ENCODE measurements at regions of chr19 and their contacts with region 1.

Region 1: DNA sequence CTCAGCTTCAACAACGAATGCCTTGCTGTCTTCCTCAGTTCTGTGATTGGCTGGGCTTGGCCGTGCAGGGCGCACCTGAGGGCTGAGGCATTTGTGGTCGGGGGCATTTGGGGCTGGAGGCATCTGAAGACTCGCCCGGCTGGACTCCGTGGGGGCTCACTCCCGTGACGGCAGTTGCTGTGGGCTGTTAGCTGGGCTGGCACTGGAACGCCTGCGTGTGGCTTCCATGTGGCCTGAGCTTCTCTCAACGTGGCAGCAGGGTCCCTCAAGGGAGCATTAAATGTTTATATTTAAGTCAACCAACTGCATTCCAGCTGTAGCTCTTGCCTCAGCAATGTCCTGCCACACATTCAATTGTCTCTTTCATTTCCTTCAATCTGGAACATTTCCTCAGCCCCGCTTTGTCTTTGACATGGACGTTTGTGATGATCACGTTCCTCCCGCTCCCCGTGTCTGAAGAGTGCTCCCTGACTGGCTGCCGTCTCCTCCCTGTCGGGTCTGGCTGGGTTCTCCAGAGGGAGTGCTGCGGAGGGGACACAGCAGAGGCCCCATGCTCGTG is 21.0 kb downstream of the CCDC8 start:
- DNase-seq: no peak
- ATAC-seq: no peak
- H3K4me3 ChIP-seq: no peak overlapping the region
- H3K27ac ChIP-seq: no peak overlapping the region
- H3K4me1 ChIP-seq: no peaks in the 10 kb centered on the region
- H3K27me3 ChIP-seq: no peaks in the 10 kb centered on the region
- CTCF ChIP-seq: no peak

Region 2: GRCh38 chr19:46159418-46160232 is 232.7 kb before region 1 on chr19:
- CTCF ChIA-PET with region 1: no interaction called
- POLR2A ChIA-PET with region 1: no interaction called
- in situ Hi-C with region 1: no loop called
- intact Hi-C with region 1: no loop called
- DNase-seq: no peak
- ATAC-seq: no peak
- H3K4me3 ChIP-seq: no peak overlapping the region
- H3K27ac ChIP-seq: no peak overlapping the region
- H3K4me1 ChIP-seq: no peaks in the 10 kb centered on the region
- H3K27me3 ChIP-seq: peaks cover 2% of the 10 kb centered on the region
- CTCF ChIP-seq: no peak

Region 3: DNA sequence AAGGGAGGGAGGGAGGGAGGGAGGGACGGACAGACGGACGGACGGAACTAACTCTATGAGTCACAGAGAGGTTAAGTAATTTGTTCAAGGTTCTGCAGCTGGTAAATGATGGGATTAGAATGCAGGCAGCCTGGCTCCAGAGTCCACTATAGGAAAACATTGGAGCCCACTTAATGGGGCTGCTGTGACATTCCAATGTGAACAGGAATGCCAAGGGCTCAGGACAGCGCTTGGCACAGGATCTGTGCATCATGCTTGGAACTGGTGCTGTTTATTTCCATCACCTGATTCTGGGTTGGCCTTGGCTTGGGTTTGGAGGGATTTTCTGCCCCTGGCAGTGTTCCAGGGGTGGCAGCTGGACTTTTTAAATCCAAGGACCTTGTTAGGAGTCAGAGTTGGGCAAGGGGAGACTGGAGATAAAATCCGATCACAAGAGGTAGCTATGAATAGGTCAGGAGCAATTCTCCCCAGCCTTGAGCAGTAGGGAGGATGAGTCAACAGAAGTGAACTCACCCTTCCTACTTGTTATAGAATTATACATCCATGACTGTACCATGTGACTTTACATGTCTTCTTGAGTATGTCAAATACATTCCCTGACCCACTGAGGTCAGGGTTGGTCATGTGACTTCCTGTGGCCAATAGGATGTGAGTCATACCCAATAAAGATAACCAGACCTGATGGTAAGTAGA is 103.3 kb before region 1 on chr19:
- CTCF ChIA-PET with region 1: interaction called, 7 read pairs
- POLR2A ChIA-PET with region 1: no interaction called
- in situ Hi-C with region 1: no loop called
- intact Hi-C with region 1: loop called (anchors 10 kb)
- DNase-seq: no peak
- ATAC-seq: peak; percentile 42; the same call in 1 of the 2 replicates
- H3K4me3 ChIP-seq: no peak overlapping the region
- H3K27ac ChIP-seq: no peak overlapping the region
- H3K4me1 ChIP-seq: no peaks in the 10 kb centered on the region
- H3K27me3 ChIP-seq: no peaks in the 10 kb centered on the region
- CTCF ChIP-seq: no peak

Region 4: GRCh38 chr19:46487802-46488445 is 95.6 kb after region 1 on chr19:
- CTCF ChIA-PET with region 1: interaction called, 12 read pairs
- POLR2A ChIA-PET with region 1: interaction called, 9 read pairs
- in situ Hi-C with region 1: no loop called
- intact Hi-C with region 1: loop called (anchors 2 kb)
- DNase-seq: peak; percentile 27
- ATAC-seq: peak; percentile 87
- H3K4me3 ChIP-seq: peak overlapping the region; percentile 15 to 33; a peak in 3 of 4 replicates
- H3K27ac ChIP-seq: no peak overlapping the region
- H3K4me1 ChIP-seq: no peaks in the 10 kb centered on the region; the same call in 1 of the 2 replicates
- H3K27me3 ChIP-seq: no peaks in the 10 kb centered on the region
- CTCF ChIP-seq: peak; percentile 87

Region 5: GRCh38 chr19:46670813-46671212 is 278.5 kb after region 1 on chr19:
- CTCF ChIA-PET with region 1: no interaction called
- POLR2A ChIA-PET with region 1: no interaction called
- in situ Hi-C with region 1: no loop called
- intact Hi-C with region 1: no loop called
- DNase-seq: no peak
- ATAC-seq: no peak
- H3K4me3 ChIP-seq: no peak overlapping the region
- H3K27ac ChIP-seq: no peak overlapping the region
- H3K4me1 ChIP-seq: no peaks in the 10 kb centered on the region
- H3K27me3 ChIP-seq: no peaks in the 10 kb centered on the region
- CTCF ChIP-seq: no peak